B cell (primary cell): ENCODE measurements at regions of chr10 and their contacts with region 1.

Region 1: GRCh38 chr10:71314028-71314693 is 4.9 kb upstream of the SLC29A3 start:
- DNase-seq: peak; percentile 76
- ATAC-seq: peak; percentile 32
- H3K4me3 ChIP-seq: no peak overlapping the region
- H3K4me3 Mint-ChIP-seq: no peak overlapping the region
- H3K27ac ChIP-seq: no peak overlapping the region
- H3K27ac Mint-ChIP-seq: no peak overlapping the region
- H3K4me1 ChIP-seq: peaks cover 7 to 20% of the 10 kb centered on the region in 2 donors
- H3K4me1 Mint-ChIP-seq: peaks cover 16% of the 10 kb centered on the region
- H3K27me3 ChIP-seq: peaks cover 0 to 4% (median 0%) of the 10 kb centered on the region in 4 experiments
- H3K27me3 Mint-ChIP-seq: peaks cover 12% of the 10 kb centered on the region
- CTCF ChIP-seq: peak; percentile 97

Region 2: GRCh38 chr10:70856454-70856853 is 457.7 kb before region 1 on chr10:
- CTCF ChIA-PET with region 1: no interaction called
- POLR2A ChIA-PET with region 1: no interaction called
- intact Hi-C with region 1: no loop called
- DNase-seq: no peak
- ATAC-seq: no peak
- H3K4me3 ChIP-seq: no peak overlapping the region
- H3K4me3 Mint-ChIP-seq: no peak overlapping the region
- H3K27ac ChIP-seq: no peak overlapping the region
- H3K27ac Mint-ChIP-seq: no peak overlapping the region
- H3K4me1 ChIP-seq: no peaks in the 10 kb centered on the region
- H3K4me1 Mint-ChIP-seq: no peaks in the 10 kb centered on the region
- H3K27me3 ChIP-seq: no peaks in the 10 kb centered on the region
- H3K27me3 Mint-ChIP-seq: no peaks in the 10 kb centered on the region
- CTCF ChIP-seq: no peak

Region 3: DNA sequence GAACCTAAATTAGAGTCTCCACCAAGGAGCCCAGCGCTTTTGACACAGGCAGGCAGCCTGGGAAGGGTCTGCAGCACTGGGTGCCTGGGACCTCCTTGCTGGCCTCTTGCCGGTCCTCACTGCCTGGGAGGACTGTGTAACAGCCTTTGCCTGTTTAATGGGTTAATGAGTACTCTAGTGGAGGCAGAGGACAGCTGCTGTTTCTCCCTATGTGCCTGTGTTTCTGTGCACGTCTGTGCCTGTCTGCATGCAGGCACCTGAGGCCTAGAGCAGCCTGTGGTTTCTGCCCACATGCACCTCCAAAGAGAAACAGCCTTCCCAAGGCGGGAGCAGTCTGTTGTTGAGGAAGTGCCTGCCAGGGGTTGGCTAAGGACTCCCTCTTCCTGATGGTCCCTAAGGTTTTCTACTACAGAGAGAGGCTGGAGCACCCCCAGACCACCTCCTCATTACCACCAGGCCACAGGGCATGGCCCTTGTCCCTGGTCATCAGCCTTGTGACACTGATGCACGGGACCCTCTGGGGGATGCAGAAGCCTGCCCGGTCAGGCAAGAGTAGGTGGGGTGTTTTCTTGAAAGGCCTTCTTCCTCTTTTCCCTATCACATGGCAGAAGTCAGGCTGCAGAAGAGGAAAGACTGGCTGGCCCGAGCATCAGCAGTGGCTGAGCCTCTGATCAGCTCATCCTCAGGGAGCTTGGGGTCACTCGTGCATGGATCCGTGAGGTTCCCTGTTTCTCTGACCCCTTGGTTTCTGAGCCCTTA is 19.1 kb after region 1 on chr10:
- CTCF ChIA-PET with region 1: interaction called, 40 read pairs
- POLR2A ChIA-PET with region 1: no interaction called
- intact Hi-C with region 1: no loop called
- DNase-seq: peak; percentile 53
- ATAC-seq: peak; percentile 54
- H3K4me3 ChIP-seq: no peak overlapping the region
- H3K4me3 Mint-ChIP-seq: peak overlapping the region; percentile 26
- H3K27ac ChIP-seq: peak overlapping the region in 1 of 2 donors; percentile 39
- H3K27ac Mint-ChIP-seq: peak overlapping the region; percentile 65
- H3K4me1 ChIP-seq: peaks cover 14 to 17% of the 10 kb centered on the region in 2 donors
- H3K4me1 Mint-ChIP-seq: peaks cover 21% of the 10 kb centered on the region
- H3K27me3 ChIP-seq: no peaks in the 10 kb centered on the region
- H3K27me3 Mint-ChIP-seq: no peaks in the 10 kb centered on the region
- CTCF ChIP-seq: no peak

Region 4: GRCh38 chr10:71569775-71570588 is 255.8 kb after region 1 on chr10:
- CTCF ChIA-PET with region 1: interaction called, 186 read pairs
- POLR2A ChIA-PET with region 1: no interaction called
- intact Hi-C with region 1: no loop called
- DNase-seq: peak; percentile 77
- ATAC-seq: peak; percentile 57
- H3K4me3 ChIP-seq: no peak overlapping the region
- H3K4me3 Mint-ChIP-seq: no peak overlapping the region
- H3K27ac ChIP-seq: no peak overlapping the region
- H3K27ac Mint-ChIP-seq: no peak overlapping the region
- H3K4me1 ChIP-seq: no peaks in the 10 kb centered on the region
- H3K4me1 Mint-ChIP-seq: no peaks in the 10 kb centered on the region
- H3K27me3 ChIP-seq: no peaks in the 10 kb centered on the region
- H3K27me3 Mint-ChIP-seq: peaks cover 5% of the 10 kb centered on the region
- CTCF ChIP-seq: peak; percentile 86

Region 5: GRCh38 chr10:71608819-71609768 is 294.9 kb after region 1 on chr10:
- CTCF ChIA-PET with region 1: interaction called, 79 read pairs
- POLR2A ChIA-PET with region 1: no interaction called
- intact Hi-C with region 1: loop called (anchors 1 kb)
- DNase-seq: peak; percentile 75
- ATAC-seq: no peak
- H3K4me3 ChIP-seq: no peak overlapping the region
- H3K4me3 Mint-ChIP-seq: no peak overlapping the region
- H3K27ac ChIP-seq: no peak overlapping the region
- H3K27ac Mint-ChIP-seq: no peak overlapping the region
- H3K4me1 ChIP-seq: no peaks in the 10 kb centered on the region
- H3K4me1 Mint-ChIP-seq: peaks cover 2% of the 10 kb centered on the region
- H3K27me3 ChIP-seq: peaks cover 0 to 15% (median 0%) of the 10 kb centered on the region in 4 experiments
- H3K27me3 Mint-ChIP-seq: peaks cover 10% of the 10 kb centered on the region
- CTCF ChIP-seq: peak; percentile 76